GM10248 (cell line): ENCODE measurements at regions of chr1 and their contacts with region 1.

Region 1: DNA sequence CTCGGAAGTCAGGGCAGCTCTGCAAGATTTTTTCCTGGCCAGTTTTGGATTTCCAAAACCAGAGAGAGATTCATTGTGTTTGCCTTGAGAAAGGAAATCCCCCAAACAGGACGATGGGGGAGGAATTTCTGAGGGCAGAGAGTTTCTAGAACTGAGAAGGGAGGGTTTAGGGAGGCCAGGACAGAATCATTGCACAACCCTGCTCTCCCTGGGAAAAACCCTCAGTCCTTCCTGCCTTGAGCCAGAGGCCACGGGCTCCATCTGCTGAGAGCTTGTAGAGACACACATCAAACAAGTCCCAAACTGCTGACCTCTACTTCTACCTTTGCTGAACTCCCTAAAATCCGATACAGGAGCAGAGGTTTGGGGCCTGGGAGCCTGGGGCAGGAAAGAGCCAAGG is 99.7 kb downstream of the NMNAT2 start:
- DNase-seq: peak; percentile 69
- CTCF ChIP-seq: peak; percentile 62

Region 2: GRCh38 chr1:183148599-183148998 is 169.8 kb before region 1 on chr1:
- CTCF ChIA-PET with region 1: no interaction called
- POLR2A ChIA-PET with region 1: no interaction called
- DNase-seq: no peak
- CTCF ChIP-seq: no peak

Region 3: DNA sequence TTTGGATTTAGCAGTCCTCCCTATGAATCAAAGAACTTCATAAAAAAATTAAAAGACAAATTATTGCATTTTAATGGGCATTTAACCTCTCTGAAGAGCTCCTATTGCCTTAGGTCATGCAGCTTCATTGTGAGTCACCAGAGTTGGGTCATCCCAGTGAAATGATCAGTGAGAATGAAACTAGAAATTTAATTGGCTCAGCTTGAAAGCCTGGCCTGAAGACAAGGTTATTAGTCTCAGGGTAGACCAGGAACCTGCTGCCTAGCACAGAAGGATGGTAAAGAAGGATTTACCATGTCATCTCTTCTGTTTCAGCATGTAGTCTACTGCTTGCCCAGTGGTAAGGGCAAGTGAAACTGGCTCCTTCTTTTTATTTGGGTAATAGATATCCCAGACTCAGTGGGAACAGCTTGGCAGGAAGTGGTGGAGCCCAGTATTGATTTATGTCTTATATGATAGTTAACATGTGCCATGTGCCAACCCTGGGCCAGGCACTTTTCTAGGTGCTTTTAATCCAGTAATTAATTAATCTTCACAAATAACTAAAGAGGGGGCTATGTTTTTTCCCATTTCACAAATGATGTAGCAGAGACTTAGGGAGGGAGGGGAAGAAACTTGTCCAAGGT is 108.8 kb before region 1 on chr1:
- CTCF ChIA-PET with region 1: no interaction called
- POLR2A ChIA-PET with region 1: no interaction called
- DNase-seq: peak; percentile 46
- CTCF ChIP-seq: no peak

Region 4: DNA sequence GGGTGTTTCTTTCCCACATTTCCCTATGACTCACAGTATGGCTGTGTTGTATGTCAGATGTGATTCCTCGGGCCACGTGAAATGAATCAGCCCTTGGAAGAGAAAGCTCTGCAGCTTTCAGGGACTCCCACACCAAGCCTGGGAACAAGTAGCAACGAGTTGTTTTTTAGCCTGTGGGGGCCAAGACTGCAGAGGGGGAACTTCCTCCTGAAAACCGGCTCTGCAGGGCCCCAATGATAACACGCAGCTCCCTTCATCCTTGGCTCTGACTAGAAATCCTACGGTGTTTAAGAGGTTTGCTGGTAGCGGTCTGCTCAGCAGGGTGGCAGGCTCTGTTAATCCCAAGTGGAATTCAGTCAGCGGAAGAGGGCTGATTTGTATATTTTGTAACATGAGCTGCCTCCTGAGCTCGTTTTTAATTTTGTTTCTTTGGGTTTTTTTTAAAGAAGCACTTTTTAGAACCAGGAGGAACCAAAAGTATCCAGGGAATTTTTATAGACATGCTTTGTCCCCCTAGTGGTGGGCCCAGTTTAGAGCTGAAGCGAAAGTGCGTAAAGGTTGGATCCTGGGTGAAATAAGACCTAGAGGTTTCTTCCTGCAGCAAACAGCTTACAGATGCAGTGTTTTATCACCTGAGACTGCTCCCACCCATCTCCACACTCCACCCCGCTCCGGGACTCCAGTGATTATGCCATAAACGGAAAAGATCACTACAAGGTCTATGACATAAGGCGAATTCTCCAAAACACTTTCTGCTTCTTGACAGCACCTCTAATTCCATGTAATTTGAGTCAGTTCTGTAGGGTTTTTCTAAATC is 83.6 kb before region 1 on chr1:
- CTCF ChIA-PET with region 1: no interaction called
- POLR2A ChIA-PET with region 1: no interaction called
- DNase-seq: no peak
- CTCF ChIP-seq: peak; percentile 9

Region 5: GRCh38 chr1:183306317-183307042 is 12.0 kb before region 1 on chr1:
- CTCF ChIA-PET with region 1: interaction called, 60 read pairs
- POLR2A ChIA-PET with region 1: no interaction called
- DNase-seq: no peak
- CTCF ChIP-seq: peak; percentile 22

Region 6: GRCh38 chr1:183330335-183330734 is 11.9 kb after region 1 on chr1:
- CTCF ChIA-PET with region 1: interaction called, 12 read pairs
- POLR2A ChIA-PET with region 1: no interaction called
- DNase-seq: no peak
- CTCF ChIP-seq: no peak